IMR-90 (cell line): ENCODE measurements at regions of chr5 and their contacts with region 1.

Region 1: GRCh38 chr5:149497357-149497756 is 53.9 kb downstream of the CSNK1A1 start:
- DNase-seq: peak; percentile 98
- ATAC-seq: peak; percentile 88
- H3K4me3 ChIP-seq: no peak overlapping the region
- H3K27ac ChIP-seq: peak overlapping the region; percentile 77
- H3K4me1 ChIP-seq: peaks cover 13% of the 10 kb centered on the region
- H3K27me3 ChIP-seq: no peaks in the 10 kb centered on the region
- CTCF ChIP-seq: no peak
- POLR2A ChIP-seq: no peak
- RAD21 ChIP-seq: 0 out of 2 replicates have a peak, but pooled peaks have one; percentile 14

Region 2: DNA sequence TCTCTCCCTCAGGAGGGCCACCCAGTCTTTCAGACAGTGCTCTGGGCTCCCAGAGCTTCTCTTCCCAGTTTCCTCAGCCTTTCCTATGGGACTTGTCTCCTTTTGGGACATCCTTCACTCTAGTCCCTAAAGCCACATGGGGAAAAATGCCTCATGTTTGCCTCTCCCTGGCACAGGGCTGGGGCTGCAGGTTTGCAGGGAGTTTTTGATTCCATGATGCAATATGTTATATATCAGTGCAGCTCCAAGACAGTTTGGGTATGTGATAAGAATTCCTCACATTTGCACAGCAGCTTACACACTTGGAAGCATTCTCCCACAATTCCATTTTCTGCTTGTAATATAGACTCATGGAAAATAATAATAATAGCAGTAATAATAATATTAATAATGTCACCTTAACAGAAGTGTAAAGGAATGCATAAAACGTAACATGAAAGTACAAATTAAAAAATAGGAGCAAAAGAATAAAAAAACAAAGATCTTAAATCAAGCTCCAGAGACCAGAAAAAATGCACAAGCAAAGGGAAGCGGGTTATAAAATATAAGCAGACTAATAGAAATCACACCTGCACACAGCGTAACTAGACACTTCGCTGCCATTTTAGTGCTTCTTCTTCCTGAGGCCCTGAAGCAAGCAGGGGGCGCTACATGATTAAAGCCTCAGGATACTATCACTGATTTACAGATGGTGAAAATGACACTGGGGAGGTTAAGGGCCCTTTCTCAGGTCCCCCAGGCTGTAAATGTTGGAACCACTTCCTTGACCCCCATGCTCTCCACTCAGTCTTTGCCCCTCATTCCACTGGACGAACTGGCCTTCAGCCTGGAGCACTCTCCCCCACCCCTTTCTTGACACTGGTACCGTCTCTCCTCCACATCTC is 48.3 kb before region 1 on chr5:
- CTCF ChIA-PET with region 1: interaction called, 7 read pairs
- POLR2A ChIA-PET with region 1: interaction called, 15 read pairs
- dilution Hi-C with region 1: no loop called
- in situ Hi-C with region 1: no loop called
- intact Hi-C with region 1: loop called (anchors 2 kb)
- DNase-seq: no peak
- ATAC-seq: no peak
- H3K4me3 ChIP-seq: no peak overlapping the region
- H3K27ac ChIP-seq: peak overlapping the region; percentile 90
- H3K4me1 ChIP-seq: peaks cover 41% of the 10 kb centered on the region
- H3K27me3 ChIP-seq: no peaks in the 10 kb centered on the region
- CTCF ChIP-seq: peak; percentile 55
- POLR2A ChIP-seq: no peak
- RAD21 ChIP-seq: peak; percentile 50

Region 3: GRCh38 chr5:149537374-149537975 is 40.1 kb after region 1 on chr5:
- CTCF ChIA-PET with region 1: no interaction called
- POLR2A ChIA-PET with region 1: no interaction called
- dilution Hi-C with region 1: no loop called
- in situ Hi-C with region 1: no loop called
- intact Hi-C with region 1: loop called (anchors 5 kb)
- DNase-seq: no peak
- ATAC-seq: peak; percentile 28
- H3K4me3 ChIP-seq: no peak overlapping the region
- H3K27ac ChIP-seq: no peak overlapping the region
- H3K4me1 ChIP-seq: peaks cover 5% of the 10 kb centered on the region
- H3K27me3 ChIP-seq: no peaks in the 10 kb centered on the region
- CTCF ChIP-seq: no peak
- POLR2A ChIP-seq: no peak
- RAD21 ChIP-seq: no peak

Region 4: GRCh38 chr5:149551200-149552037 is 54.1 kb after region 1 on chr5 and contains the start of gene CSNK1A1:
- CTCF ChIA-PET with region 1: interaction called, 4 read pairs
- POLR2A ChIA-PET with region 1: interaction called, 4 read pairs
- dilution Hi-C with region 1: no loop called
- in situ Hi-C with region 1: no loop called
- intact Hi-C with region 1: loop called (anchors 2 kb)
- DNase-seq: peak; percentile 98
- ATAC-seq: peak; percentile 93
- H3K4me3 ChIP-seq: peak within 1 kb of the TSS; percentile 81
- H3K27ac ChIP-seq: peak within 1 kb of the TSS; percentile 100
- H3K4me1 ChIP-seq: no peaks in the 10 kb centered on the region; the same call in 1 of the 2 replicates
- H3K27me3 ChIP-seq: no peaks in the 10 kb centered on the region
- CTCF ChIP-seq: peak; percentile 77
- POLR2A ChIP-seq: peak; percentile 98
- RAD21 ChIP-seq: peak; percentile 77
- total RNA-seq, gene CSNK1A1: 419 and 573 TPM in 2 replicates